ENCODE measurements at regions of chr14 and their contacts with region 1.

Region 1: DNA sequence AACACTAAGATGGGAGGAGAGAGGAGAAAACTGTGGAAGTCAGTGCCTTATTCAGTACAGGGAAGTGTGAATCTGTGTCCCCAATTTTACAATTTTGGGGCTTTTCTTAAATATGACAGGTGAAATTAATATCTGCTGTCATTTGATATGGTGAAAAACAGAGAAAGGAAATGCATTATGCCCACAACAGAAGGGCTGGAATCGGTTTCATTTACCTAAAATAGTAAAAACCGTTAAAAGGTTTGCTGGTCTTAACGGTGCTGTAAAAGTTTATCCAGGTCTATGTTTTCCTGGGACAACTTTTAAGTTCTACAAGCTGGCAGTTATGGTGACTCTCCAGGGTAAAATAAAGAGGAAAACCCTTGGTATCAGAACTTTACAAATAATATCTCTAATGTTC is 310.8 kb downstream of the FUT8 start:
- DNase-seq: no peak
- H3K4me3 ChIP-seq: no peak overlapping the region
- H3K27ac ChIP-seq: no peak overlapping the region
- H3K4me1 ChIP-seq: no peaks in the 10 kb centered on the region
- H3K27me3 ChIP-seq: no peaks in the 10 kb centered on the region
- CTCF ChIP-seq: no peak
- POLR2A ChIP-seq: no peak

Region 2: DNA sequence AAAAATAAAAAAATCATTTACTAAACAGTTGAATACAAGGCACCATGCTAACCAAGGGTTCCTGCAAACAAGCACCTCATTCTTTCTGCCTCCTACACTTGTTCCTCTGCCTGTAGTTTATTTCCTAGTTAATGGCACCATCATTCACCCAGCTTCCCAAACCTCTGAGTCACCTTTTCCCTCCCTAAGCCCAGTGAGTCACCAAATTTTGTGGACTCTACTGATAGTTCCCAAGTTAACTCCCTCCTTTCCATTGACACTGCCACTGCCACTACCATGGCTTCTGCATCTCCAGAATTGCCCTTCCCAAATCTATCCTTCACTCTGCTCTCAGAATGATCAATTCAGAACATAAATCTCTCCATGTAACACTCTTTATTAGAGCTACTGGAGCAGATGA is 1463.9 kb after region 1 on chr14:
- CTCF ChIA-PET with region 1: no interaction called
- POLR2A ChIA-PET with region 1: no interaction called
- dilution Hi-C with region 1: no loop called
- intact Hi-C with region 1: loop called (anchors 10 kb)
- DNase-seq: peak; percentile 31
- H3K4me3 ChIP-seq: no peak overlapping the region
- H3K27ac ChIP-seq: no peak overlapping the region
- H3K4me1 ChIP-seq: peaks cover 10% of the 10 kb centered on the region
- H3K27me3 ChIP-seq: no peaks in the 10 kb centered on the region
- CTCF ChIP-seq: no peak
- POLR2A ChIP-seq: no peak